ENCODE measurements at regions of chr4 and their contacts with region 1.

Region 1: GRCh38 chr4:103375278-103375677 is 177.1 kb upstream of the CENPE start:
- DNase-seq: peak; percentile 0
- ATAC-seq: no peak
- H3K4me3 ChIP-seq: no peak overlapping the region
- H3K27ac ChIP-seq: no peak overlapping the region
- H3K4me1 ChIP-seq: no peaks in the 10 kb centered on the region
- H3K27me3 ChIP-seq: no peaks in the 10 kb centered on the region
- CTCF ChIP-seq: no peak
- POLR2A ChIP-seq: no peak
- RAD21 ChIP-seq: no peak

Region 2: DNA sequence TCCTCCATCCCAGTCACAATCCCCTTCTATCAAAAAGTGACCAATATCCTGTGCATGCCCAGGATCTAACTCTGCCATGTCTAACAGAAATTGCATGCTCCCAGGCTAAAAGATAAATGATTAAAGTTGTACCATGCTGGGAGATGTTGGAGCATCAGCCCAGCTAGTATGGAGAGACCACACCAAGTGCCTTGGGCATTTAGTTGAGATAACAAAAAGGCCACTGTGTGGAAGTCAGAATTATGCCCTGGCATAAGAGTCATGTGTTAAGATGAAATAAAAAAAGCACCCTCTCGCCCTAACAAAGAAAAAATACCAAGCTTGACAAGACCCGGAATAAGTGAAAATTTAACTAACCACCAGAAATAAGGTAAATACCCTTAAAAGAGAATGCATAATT is 21.3 kb before region 1 on chr4:
- CTCF ChIA-PET with region 1: no interaction called
- POLR2A ChIA-PET with region 1: no interaction called
- dilution Hi-C with region 1: no loop called
- in situ Hi-C with region 1: no loop called
- intact Hi-C with region 1: loop called (anchors 1 kb)
- DNase-seq: no peak
- ATAC-seq: no peak
- H3K4me3 ChIP-seq: no peak overlapping the region
- H3K27ac ChIP-seq: no peak overlapping the region
- H3K4me1 ChIP-seq: no peaks in the 10 kb centered on the region
- H3K27me3 ChIP-seq: no peaks in the 10 kb centered on the region
- CTCF ChIP-seq: no peak
- POLR2A ChIP-seq: no peak
- RAD21 ChIP-seq: no peak

Region 3: GRCh38 chr4:103673983-103674382 is 298.7 kb after region 1 on chr4:
- CTCF ChIA-PET with region 1: no interaction called
- POLR2A ChIA-PET with region 1: no interaction called
- dilution Hi-C with region 1: no loop called
- in situ Hi-C with region 1: no loop called
- intact Hi-C with region 1: no loop called
- DNase-seq: no peak
- ATAC-seq: no peak
- H3K4me3 ChIP-seq: no peak overlapping the region
- H3K27ac ChIP-seq: no peak overlapping the region
- H3K4me1 ChIP-seq: no peaks in the 10 kb centered on the region
- H3K27me3 ChIP-seq: no peaks in the 10 kb centered on the region
- CTCF ChIP-seq: no peak
- POLR2A ChIP-seq: no peak
- RAD21 ChIP-seq: no peak

Measured in IMR-90 (cell line).